Mammary epithelial cell (primary cell): ENCODE measurements at regions of chr15 and their contacts with region 1.

Region 1: GRCh38 chr15:101326462-101327135 is 31.6 kb upstream of the SNRPA1 start:
- DNase-seq: no peak
- H3K4me3 ChIP-seq: no peak overlapping the region
- H3K27ac ChIP-seq: no peak overlapping the region
- H3K4me1 ChIP-seq: no peaks in the 10 kb centered on the region
- H3K27me3 ChIP-seq: peaks cover 2% of the 10 kb centered on the region
- CTCF ChIP-seq: no peak

Region 2: DNA sequence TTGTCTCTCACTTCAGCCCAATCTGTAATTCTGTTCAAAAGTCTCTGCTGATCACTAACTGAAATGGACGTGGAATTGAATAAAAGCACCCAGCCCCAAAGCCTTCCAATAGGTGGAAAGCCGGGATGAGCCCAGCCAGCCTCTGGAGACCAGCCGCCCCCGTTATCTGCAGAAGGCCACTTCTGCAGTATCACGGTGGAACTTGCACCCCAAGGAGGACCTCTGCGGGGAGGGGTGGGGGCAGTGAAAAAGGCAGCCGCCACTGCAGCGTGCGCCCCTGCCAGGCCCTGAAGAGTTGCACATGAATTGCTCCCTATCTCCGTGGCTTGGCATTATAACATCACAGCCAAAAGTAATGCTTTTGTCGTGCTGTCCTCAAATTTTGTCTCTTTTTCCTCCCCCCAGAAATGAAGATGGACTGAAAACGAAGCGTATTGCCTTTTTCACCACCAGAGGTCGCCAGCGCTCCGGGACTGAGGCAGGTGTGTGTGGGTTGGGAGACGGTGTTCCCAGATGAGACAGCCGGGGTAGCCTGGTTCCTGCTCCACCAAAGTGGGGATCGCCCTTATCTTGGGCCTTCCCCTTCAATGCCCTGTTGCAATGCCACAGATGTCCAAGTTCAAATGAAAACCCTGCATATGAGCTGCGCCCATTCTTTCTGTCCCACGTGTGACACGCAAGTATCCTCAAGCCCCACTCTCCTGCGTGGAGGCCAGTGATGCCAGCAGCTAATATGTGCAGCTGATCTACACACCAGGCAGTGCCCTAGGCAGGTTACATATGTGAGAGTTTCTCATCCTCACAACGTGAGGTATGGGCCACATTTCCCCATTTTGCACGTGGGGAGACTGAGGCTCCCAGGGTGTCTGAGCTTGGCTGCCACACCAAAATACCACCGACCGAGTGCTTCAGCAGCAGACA is 311.4 kb before region 1 on chr15:
- CTCF ChIA-PET with region 1: no interaction called
- dilution Hi-C with region 1: no loop called
- in situ Hi-C with region 1: no loop called
- intact Hi-C with region 1: no loop called
- DNase-seq: peak; percentile 52
- H3K4me3 ChIP-seq: no peak overlapping the region
- H3K27ac ChIP-seq: no peak overlapping the region
- H3K4me1 ChIP-seq: no peaks in the 10 kb centered on the region
- H3K27me3 ChIP-seq: no peaks in the 10 kb centered on the region
- CTCF ChIP-seq: peak; percentile 95 to 96

Region 3: DNA sequence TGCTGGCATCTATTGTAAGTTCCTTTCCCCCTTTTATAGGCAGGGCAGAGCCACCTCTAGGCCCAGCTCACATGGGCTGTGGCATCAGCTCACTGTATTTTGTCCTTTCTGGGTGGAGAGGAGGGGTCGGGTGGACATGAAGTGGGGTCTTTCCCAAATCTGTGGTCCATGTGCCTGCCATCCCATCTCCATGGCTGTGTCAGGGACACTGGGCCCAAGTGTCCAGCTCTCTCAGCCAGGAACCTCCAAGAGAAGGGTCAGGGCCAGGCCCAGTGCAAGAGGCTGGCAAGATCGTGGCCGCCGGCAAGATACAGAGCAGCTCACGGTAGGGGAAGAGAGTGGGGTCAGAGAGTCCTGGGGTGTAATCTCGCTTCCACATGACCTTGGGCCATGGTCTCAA is 77.6 kb after region 1 on chr15:
- CTCF ChIA-PET with region 1: no interaction called
- dilution Hi-C with region 1: loop called (anchors 5 kb)
- in situ Hi-C with region 1: no loop called
- intact Hi-C with region 1: no loop called
- DNase-seq: no peak
- H3K4me3 ChIP-seq: no peak overlapping the region
- H3K27ac ChIP-seq: no peak overlapping the region
- H3K4me1 ChIP-seq: no peaks in the 10 kb centered on the region
- H3K27me3 ChIP-seq: no peaks in the 10 kb centered on the region
- CTCF ChIP-seq: no peak